Psoas muscle (tissue), 8 donors: ENCODE measurements at regions of chr22 and their contacts with region 1.

Region 1: DNA sequence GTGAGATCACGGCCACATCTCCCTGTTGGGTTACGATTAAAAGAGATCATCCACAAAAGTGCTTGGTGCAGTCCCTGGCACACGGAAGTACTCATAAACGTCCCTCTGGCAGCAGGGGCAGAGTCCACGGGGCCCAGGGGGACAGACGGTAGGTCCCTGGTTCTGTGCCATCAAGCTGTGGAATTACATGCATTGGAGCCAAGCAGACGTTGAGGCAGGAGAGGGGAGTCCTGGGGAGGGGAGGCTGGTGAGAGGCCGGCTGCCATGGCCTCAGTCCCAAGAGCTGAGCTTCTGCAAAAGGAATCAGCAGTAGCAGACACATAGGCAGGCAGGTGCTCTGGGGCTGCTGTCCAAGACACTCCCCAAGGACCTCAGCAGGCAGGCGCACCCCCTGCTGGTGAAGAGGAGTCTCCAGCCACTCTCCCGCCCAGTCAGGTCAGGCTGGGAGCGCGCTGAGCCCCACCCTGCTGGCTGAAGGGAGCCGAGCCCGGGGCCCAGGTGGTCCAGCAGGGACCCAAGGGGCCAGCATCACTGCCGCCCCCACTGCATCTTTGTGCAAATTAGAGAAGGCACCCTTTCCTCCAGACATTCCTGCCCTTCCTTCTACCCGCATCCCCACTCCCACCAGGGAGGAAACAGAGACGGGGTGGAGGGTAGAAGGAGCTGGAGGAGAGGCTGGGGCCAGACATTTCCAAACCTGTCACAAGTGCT is 7.6 kb upstream of the KCTD17 start:
- DNase-seq: peak; percentile 52 to 77
- ATAC-seq: peak; percentile 79 to 82 (median 80)
- H3K4me3 ChIP-seq: no peak overlapping the region
- H3K27ac ChIP-seq: no peak overlapping the region
- H3K4me1 ChIP-seq: no peaks in the 10 kb centered on the region
- H3K27me3 ChIP-seq: peaks cover 0 to 38% (median 0%) of the 10 kb centered on the region in 3 donors
- CTCF ChIP-seq: peak; percentile 50

Region 2: DNA sequence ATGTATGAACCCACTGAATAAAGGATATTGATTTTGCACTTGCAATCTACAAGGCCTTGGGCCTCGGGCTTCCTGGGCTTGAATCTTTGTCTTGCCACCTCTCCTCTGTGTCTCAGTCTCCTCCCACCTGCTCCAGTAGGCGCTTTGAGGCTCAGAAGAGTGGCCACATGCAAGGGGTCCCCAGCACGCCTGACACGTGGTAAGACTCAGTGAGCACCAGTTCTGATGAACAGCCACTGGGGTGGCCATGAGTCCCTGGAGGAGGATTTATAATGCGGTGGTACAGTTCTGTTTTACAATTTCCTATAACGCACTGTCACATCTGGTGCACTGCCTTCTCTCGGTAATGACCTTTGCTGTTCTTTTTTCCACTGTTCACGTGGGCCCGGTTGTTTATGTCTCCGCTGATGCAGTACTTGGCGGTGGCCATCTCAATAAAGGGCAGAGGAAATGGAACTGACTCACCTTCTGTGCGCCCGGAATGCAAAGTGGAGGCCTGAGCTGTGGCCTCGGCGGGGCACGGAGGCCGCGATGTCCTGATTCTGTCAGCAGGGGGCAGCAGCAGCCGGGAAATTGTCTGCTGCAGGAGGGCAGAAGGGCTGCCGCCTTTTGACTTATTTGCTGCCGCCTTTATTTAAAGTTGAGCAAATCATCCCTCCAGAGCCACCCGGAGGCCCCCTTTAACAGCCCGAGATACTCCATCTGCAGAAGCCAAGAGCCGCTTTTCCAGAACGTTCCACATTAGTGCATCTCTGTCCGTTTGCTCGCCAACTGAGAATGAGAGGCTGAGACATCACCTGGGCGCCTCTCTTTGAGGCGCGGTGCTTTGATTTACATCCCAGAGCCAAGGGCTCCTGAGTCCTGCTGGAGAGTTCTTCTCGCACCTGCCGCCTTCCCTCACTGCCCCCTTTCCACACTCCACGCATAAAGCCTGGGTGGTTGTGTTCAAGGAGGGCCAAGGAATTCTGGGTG is 262.0 kb before region 1 on chr22:
- intact Hi-C with region 1: loop called in 1 of 2 experiments (anchors 10 kb)
- DNase-seq: peak; percentile 74 to 87
- ATAC-seq: peak; percentile 88 to 96 (median 92)
- H3K4me3 ChIP-seq: no peak overlapping the region
- H3K27ac ChIP-seq: no peak overlapping the region
- H3K4me1 ChIP-seq: no peaks in the 10 kb centered on the region
- H3K27me3 ChIP-seq: peaks cover 0 to 26% (median 5%) of the 10 kb centered on the region in 3 donors
- CTCF ChIP-seq: peak; percentile 93

Region 3: DNA sequence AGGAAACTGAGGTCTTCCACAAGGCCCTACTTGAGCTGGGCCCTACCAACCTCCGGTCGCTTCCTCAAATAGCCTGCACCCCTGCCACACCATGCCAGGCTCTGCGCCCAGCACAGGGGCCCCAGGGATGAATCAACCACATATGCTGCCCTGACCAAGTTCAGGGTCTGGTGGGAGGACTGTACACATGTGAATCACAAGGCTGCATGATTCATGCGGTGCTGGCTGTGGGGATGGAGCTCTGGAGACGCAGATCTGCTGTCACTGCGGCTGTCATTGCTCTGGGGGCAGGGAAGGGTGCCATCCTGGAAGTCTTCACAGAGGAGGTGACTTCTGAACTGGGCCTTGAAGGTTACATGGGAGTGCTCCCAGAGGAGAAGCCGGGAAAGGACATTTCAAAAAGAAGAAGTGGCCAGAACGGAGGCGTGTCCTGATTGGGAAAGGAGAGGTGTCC is 259.9 kb after region 1 on chr22:
- intact Hi-C with region 1: no loop called
- DNase-seq: peak in 1 of 2 donors; percentile 39
- ATAC-seq: peak in 2 of 4 donors; percentile 15 to 21
- H3K4me3 ChIP-seq: no peak overlapping the region
- H3K27ac ChIP-seq: no peak overlapping the region
- H3K4me1 ChIP-seq: peaks cover 4% of the 10 kb centered on the region
- H3K27me3 ChIP-seq: peaks cover 0 to 5% (median 5%) of the 10 kb centered on the region in 3 donors
- CTCF ChIP-seq: no peak